ENCODE measurements at regions of chr1 and their contacts with region 1.

Region 1: GRCh38 chr1:145845514-145846161 is at the start of gene NUDT17:
- DNase-seq: peak; percentile 85
- ATAC-seq: peak; percentile 77
- H3K4me3 Mint-ChIP-seq: no peak within 1 kb of the TSS
- H3K27ac Mint-ChIP-seq: no peak within 1 kb of the TSS
- H3K4me1 Mint-ChIP-seq: peaks cover 6% of the 10 kb centered on the region
- H3K27me3 Mint-ChIP-seq: no peaks in the 10 kb centered on the region
- total RNA-seq, gene NUDT17: 2.9 to 3.5 TPM

Region 2: DNA sequence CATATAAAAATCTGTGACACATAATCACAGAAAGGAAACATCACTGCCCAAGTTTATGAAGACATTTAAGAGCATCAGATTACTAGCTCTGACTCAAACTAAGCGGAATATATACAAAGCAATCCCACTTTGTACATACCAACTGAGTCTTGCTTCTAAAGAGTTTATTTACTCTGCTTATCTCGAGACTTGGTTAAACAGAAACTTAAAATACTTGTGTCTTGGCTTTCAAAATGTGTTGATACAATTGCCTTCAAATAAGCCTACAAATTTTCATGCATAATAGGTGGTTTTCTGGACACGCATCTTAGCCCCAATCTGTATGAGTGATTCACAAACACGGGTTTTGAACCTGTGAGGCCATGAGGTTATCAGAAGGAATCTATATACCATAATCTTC is 105.4 kb before region 1 on chr1:
- POLR2A ChIA-PET with region 1: no interaction called
- DNase-seq: no peak
- ATAC-seq: no peak
- H3K4me3 Mint-ChIP-seq: no peak overlapping the region
- H3K27ac Mint-ChIP-seq: no peak overlapping the region
- H3K4me1 Mint-ChIP-seq: peaks cover 2% of the 10 kb centered on the region
- H3K27me3 Mint-ChIP-seq: no peaks in the 10 kb centered on the region

Region 3: GRCh38 chr1:145804235-145805045 is 41.2 kb before region 1 on chr1:
- POLR2A ChIA-PET with region 1: no interaction called
- DNase-seq: no peak
- ATAC-seq: no peak
- H3K4me3 Mint-ChIP-seq: no peak overlapping the region
- H3K27ac Mint-ChIP-seq: no peak overlapping the region
- H3K4me1 Mint-ChIP-seq: peaks cover 16% of the 10 kb centered on the region
- H3K27me3 Mint-ChIP-seq: no peaks in the 10 kb centered on the region

Region 4: DNA sequence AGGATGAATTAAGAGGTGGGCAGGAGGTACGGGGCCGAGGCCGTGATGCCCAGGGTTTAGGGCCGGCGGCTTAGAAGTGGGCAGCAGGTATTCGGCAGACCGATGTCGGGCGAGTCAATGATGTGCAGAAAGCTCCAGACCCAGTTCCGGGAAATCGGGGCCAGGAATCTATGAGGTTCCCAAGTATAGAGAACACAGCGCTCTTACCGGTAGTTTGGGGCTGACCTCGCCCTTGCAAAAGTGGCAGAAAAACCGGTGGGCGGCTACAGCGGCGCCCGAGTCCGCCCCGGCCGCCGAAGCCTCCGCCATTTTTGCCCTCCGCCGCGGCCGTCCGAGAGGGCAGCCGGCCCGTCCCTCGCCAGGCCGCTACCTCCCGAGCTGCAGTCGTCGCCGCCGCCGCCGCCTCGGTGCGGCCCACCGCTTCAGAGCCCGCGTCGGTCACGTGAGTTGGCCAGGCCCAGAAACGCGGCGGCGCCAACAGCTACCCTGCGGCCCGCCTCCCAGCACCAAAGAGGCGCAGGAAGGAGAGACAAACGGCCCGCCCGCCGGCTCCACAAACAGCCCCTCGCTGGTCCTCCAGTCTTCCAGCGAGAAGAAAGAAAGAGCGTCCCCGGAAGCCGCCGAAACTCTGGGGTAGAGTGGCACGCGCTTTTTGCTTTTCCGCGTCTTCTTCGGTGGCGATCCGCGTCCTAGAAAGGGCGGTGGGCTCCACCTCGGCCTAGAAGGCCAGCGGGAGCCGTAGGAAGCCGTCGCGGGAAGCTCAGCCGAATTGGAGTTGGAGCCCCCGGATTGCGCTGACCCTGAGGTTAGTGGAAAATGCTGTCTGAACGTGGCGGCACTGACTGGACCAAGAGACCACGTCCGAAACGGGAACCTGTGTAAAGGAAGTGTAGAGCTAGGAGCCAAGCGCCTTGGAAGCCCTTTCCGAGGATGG is 21.8 kb before region 1 on chr1 and contains the starts of genes POLR3C and RNF115:
- POLR2A ChIA-PET with region 1: interaction called, 18 read pairs
- DNase-seq: peak; percentile 87
- ATAC-seq: peak; percentile 96
- H3K4me3 Mint-ChIP-seq: peak within 1 kb of the TSS; percentile 86
- H3K27ac Mint-ChIP-seq: peak within 1 kb of the TSS; percentile 92
- H3K4me1 Mint-ChIP-seq: peaks cover 25% of the 10 kb centered on the region
- H3K27me3 Mint-ChIP-seq: no peaks in the 10 kb centered on the region
- total RNA-seq, gene POLR3C: 34.6 to 35.1 TPM
- total RNA-seq, gene RNF115: 14.7 to 15.0 TPM

Region 5: DNA sequence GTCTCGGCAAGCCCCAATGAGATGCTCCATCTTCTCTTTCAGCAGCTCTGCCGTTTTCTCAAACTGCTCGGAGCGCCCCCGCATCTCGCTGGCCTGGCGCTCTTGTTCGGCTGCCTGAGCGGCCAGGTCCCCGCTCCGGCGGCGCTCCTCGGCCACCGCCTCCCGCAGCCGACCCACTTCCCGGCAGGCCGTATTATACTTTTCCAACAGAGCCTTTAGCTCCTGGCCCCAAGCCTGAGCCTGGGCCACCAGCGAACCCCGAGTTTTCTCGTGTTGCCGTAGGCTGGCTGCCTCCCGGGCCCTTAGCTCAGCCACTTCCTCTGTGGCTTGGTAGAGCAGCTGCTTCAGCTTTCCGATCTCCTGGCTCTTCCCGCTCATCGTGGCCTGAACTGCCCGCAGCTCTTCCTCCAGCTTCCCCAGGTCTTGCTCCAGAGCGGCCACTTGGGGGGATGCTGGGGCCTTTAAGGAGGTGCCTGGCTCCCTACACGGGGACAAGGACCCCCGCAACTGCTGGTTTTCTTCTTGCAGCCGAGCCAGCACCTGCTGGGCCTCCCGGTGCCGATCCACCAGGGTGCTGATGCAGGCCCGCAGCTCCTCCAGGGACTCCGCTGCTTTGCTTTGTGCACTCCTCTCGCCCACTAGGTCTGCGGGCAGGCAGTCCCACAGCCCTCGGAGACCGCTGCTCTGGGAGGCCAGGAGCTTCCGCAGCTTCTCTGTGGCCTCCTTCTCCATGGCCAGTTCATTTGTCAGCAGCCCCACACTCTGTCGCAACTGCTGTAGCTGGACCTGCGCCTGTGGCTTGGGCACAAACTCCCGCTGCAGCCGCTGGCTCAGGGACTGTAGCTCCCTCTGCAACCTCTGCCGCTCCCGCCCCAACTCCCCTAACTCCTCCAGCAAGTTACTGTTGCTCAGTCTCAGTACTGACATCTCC is 26.6 kb after region 1 on chr1:
- POLR2A ChIA-PET with region 1: interaction called, 12 read pairs
- DNase-seq: peak; percentile 69
- ATAC-seq: peak; percentile 91
- H3K4me3 Mint-ChIP-seq: peak overlapping the region; percentile 83
- H3K27ac Mint-ChIP-seq: peak overlapping the region; percentile 84
- H3K4me1 Mint-ChIP-seq: peaks cover 14% of the 10 kb centered on the region
- H3K27me3 Mint-ChIP-seq: peaks cover 34% of the 10 kb centered on the region

Region 6: GRCh38 chr1:145949219-145949618 is 103.6 kb after region 1 on chr1:
- POLR2A ChIA-PET with region 1: no interaction called
- DNase-seq: no peak
- ATAC-seq: no peak
- H3K4me3 Mint-ChIP-seq: no peak overlapping the region
- H3K27ac Mint-ChIP-seq: no peak overlapping the region
- H3K4me1 Mint-ChIP-seq: peaks cover 31% of the 10 kb centered on the region
- H3K27me3 Mint-ChIP-seq: no peaks in the 10 kb centered on the region

Measured in activated naive CD8-positive, alpha-beta T cell treated with anti-CD3 and anti-CD28 coated beads, Interleukin-2, amount 10 ng/mL, durations not matched to agents 7 days and 5 days (primary cell).